Heart left ventricle (tissue), 16 donors: ENCODE measurements at regions of chr14 and their contacts with region 1.

Region 1: DNA sequence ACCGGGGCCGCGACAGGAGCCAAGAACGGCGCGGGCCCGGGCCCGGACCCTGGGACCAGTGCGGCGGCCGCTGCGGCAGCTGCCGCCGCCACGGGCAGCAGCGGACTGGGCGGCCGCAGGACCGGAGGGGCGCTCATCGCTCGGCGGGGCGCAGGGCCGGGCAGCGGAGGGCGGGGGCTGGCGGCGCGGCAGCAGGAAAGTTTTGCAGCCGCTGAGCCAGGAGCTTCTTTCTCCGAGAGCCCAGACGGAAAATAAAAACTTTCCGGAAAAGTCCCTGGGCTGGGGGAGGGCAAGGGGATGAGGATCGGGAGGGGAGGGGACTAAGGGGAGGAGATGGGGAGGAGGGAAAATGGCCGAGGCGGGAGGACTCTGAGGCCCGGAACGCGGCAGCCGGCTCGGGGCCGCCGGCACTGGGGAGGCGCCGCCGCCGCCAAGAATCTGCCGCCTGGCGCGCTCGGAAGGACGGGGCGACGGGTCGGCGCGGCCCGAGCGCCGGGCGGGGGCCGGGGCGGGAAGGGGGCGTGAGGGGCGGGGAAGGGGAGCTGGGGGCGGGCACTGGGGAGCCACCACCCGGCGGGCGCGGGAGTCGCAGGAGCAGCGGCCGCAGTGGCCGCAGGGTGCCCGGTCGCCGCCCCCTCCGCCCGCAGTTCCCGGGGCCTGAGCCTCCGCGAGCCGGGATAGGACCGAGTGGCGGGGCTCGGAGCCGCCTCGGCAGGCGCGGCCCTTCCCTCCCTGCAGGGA is at the start of gene PRKD1:
- DNase-seq: peak; percentile 71 to 82 (median 72)
- ATAC-seq: peak; percentile 58 to 91 (median 86)
- H3K4me3 ChIP-seq: peak within 1 kb of the TSS; percentile 65 to 93 (median 84)
- H3K27ac ChIP-seq: peak within 1 kb of the TSS; percentile 52 to 89 (median 80)
- H3K4me1 ChIP-seq: peaks cover 0 to 25% (median 13%) of the 10 kb centered on the region in 12 donors
- H3K27me3 ChIP-seq: peaks cover 0 to 20% (median 0%) of the 10 kb centered on the region in 9 donors
- CTCF ChIP-seq: peak in 11 of 12 donors; percentile 8 to 56 (median 43)
- POLR2A ChIP-seq: no peak
- total RNA-seq, gene PRKD1: 2.1 to 8.8 (median 3.7) TPM

Region 2: GRCh38 chr14:29548948-29549370 is 378.6 kb before region 1 on chr14:
- intact Hi-C with region 1: loop called in 5 of 10 experiments (anchors 5 to 10 kb)
- DNase-seq: no peak
- ATAC-seq: peak in 3 of 4 donors; percentile 49 to 76 (median 74)
- H3K4me3 ChIP-seq: no peak overlapping the region
- H3K27ac ChIP-seq: no peak overlapping the region
- H3K4me1 ChIP-seq: no peaks in the 10 kb centered on the region
- H3K27me3 ChIP-seq: peaks cover 0 to 8% (median 0%) of the 10 kb centered on the region in 9 donors
- CTCF ChIP-seq: peak; percentile 49 to 73 (median 64)
- POLR2A ChIP-seq: no peak

Region 3: GRCh38 chr14:29558516-29558915 is 369.0 kb before region 1 on chr14:
- intact Hi-C with region 1: loop called in 5 of 10 experiments (anchors 5 to 10 kb)
- DNase-seq: no peak
- ATAC-seq: no peak
- H3K4me3 ChIP-seq: no peak overlapping the region
- H3K27ac ChIP-seq: no peak overlapping the region
- H3K4me1 ChIP-seq: no peaks in the 10 kb centered on the region
- H3K27me3 ChIP-seq: no peaks in the 10 kb centered on the region
- CTCF ChIP-seq: no peak
- POLR2A ChIP-seq: no peak

Region 4: DNA sequence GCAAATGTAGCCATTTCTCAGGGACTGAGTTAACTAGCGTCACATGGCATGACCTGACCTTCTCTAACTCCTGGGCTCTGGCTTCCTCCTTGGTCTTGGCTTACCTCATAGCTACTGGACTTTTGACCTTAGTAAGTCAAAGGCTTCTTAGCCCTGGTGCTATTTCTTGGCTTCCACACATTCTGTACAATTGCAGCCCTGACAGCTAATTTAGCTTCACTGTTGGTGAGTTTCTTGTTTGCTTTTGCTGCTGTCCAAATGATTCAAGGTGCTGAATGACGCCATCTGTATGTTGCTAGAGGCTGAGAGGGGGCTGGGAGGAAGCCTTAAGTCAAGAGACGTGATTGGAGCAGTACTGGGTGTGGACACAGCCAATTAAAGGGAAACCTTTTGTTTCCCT is 202.6 kb before region 1 on chr14:
- intact Hi-C with region 1: loop called in 1 of 10 experiments (anchors 10 kb)
- DNase-seq: no peak
- ATAC-seq: peak in 1 of 4 donors; percentile 29
- H3K4me3 ChIP-seq: no peak overlapping the region
- H3K27ac ChIP-seq: no peak overlapping the region
- H3K4me1 ChIP-seq: peaks cover 0 to 17% (median 10%) of the 10 kb centered on the region in 12 donors
- H3K27me3 ChIP-seq: no peaks in the 10 kb centered on the region
- CTCF ChIP-seq: no peak
- POLR2A ChIP-seq: no peak

Region 5: DNA sequence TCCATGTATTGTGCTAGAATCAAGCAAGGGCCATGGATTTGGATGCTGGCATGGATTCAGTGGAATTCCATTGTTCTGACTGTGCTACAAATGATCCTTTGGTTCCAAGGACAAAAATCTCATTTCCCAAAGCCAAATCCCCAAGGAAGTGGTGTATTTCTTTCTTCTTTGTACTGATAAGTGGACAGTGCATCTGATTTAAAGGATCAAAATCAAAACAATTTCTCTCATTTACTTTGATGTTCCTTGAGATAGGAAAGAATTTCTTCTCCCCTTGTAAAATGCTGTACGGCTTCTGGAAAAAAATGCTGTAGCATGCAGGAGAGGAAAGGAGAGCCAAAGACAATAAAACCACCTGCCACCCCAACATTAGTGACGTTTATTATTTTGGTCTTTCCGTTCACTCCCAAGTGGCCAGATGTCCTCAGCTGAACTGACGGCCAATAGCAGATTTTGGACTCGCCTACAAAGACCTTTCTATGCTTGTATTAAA is 185.6 kb before region 1 on chr14:
- intact Hi-C with region 1: loop called in 3 of 10 experiments (anchors 5 to 10 kb)
- DNase-seq: peak in 4 of 5 donors; percentile 30 to 66 (median 41)
- ATAC-seq: peak; percentile 70 to 88 (median 80)
- H3K4me3 ChIP-seq: no peak overlapping the region
- H3K27ac ChIP-seq: peak overlapping the region in 9 of 12 donors; percentile 1 to 57 (median 27)
- H3K4me1 ChIP-seq: peaks cover 4 to 74% (median 34%) of the 10 kb centered on the region in 12 donors
- H3K27me3 ChIP-seq: no peaks in the 10 kb centered on the region
- CTCF ChIP-seq: no peak
- POLR2A ChIP-seq: no peak

Region 6: GRCh38 chr14:29810682-29811081 is 116.9 kb before region 1 on chr14:
- intact Hi-C with region 1: loop called in 2 of 10 experiments (anchors 5 to 10 kb)
- DNase-seq: peak in 1 of 5 donors; percentile 28
- ATAC-seq: no peak
- H3K4me3 ChIP-seq: no peak overlapping the region
- H3K27ac ChIP-seq: no peak overlapping the region
- H3K4me1 ChIP-seq: peaks cover 0 to 28% (median 13%) of the 10 kb centered on the region in 12 donors
- H3K27me3 ChIP-seq: no peaks in the 10 kb centered on the region
- CTCF ChIP-seq: no peak
- POLR2A ChIP-seq: no peak

Region 7: GRCh38 chr14:29913566-29913965 is 14.0 kb before region 1 on chr14:
- intact Hi-C with region 1: no loop called
- DNase-seq: no peak
- ATAC-seq: no peak
- H3K4me3 ChIP-seq: no peak overlapping the region
- H3K27ac ChIP-seq: no peak overlapping the region
- H3K4me1 ChIP-seq: no peaks in the 10 kb centered on the region
- H3K27me3 ChIP-seq: no peaks in the 10 kb centered on the region
- CTCF ChIP-seq: no peak
- POLR2A ChIP-seq: no peak

Region 8: GRCh38 chr14:29982993-29983392 is 55.4 kb after region 1 on chr14:
- intact Hi-C with region 1: no loop called
- DNase-seq: no peak
- ATAC-seq: no peak
- H3K4me3 ChIP-seq: no peak overlapping the region
- H3K27ac ChIP-seq: no peak overlapping the region
- H3K4me1 ChIP-seq: no peaks in the 10 kb centered on the region
- H3K27me3 ChIP-seq: no peaks in the 10 kb centered on the region
- CTCF ChIP-seq: no peak
- POLR2A ChIP-seq: no peak